Aorta (tissue), 5 donors: ENCODE measurements at regions of chr13 and their contacts with region 1.

Region 1: DNA sequence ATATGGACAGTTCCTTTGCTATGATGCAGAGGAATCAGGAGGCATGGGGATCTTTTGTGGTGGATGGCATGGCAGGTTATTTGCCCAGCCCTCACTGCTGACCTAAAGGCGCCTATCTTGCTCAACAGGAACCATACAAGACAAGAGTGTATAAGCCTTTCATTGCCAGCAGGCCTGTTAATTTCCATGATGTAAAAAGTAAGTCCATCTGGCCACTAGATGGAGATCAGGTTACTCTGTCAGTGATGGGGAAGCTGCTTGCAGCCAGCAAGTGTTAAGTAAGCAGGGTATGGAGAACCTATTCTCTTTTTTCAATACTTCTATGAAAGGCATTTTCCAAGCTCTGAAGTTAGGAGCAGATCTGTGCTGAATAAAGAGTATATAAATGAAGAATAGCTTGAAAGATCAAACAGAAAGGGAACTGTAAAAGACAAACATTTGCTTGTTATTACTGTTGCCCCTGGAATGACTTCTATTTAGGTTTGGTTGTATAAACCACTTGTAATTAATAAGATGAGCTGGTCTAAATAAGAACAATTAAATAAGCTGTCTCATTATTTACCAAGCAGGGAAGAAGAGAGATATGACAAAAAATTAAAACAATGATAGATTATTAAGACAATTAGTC is 210.9 kb downstream of the RGCC start:
- DNase-seq: peak in 1 of 2 donors; percentile 62
- ATAC-seq: peak; percentile 92
- H3K4me3 ChIP-seq: no peak overlapping the region
- H3K27ac ChIP-seq: no peak overlapping the region
- H3K4me1 ChIP-seq: no peaks in the 10 kb centered on the region
- H3K27me3 ChIP-seq: no peaks in the 10 kb centered on the region

Region 2: DNA sequence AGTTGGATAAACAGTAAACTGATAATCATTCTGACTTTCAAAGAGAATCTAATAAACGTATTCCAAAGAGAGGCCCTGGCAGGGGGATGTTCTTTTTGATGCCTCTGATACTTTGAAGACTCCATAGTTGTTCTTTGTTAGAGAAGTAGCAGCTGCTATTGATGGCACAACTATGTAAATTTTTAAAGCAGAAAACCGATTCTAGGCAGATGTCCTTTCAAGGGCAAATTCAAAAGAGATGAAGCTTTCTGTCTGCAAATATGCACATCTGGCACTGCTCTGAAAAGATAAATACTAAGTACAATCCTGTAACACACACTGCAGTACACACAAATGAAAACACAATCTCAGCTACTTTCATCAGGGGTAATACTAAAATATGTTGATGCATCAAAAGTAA is 42.5 kb after region 1 on chr13:
- intact Hi-C with region 1: loop called in 1 of 2 experiments (anchors 5 kb)
- DNase-seq: no peak
- ATAC-seq: no peak
- H3K4me3 ChIP-seq: no peak overlapping the region
- H3K27ac ChIP-seq: no peak overlapping the region
- H3K4me1 ChIP-seq: peaks cover 0 to 5% of the 10 kb centered on the region in 2 donors
- H3K27me3 ChIP-seq: no peaks in the 10 kb centered on the region

Region 3: GRCh38 chr13:42039946-42040729 is 371.9 kb after region 1 on chr13:
- intact Hi-C with region 1: loop called in 1 of 2 experiments (anchors 10 kb)
- DNase-seq: peak; percentile 95 to 98
- ATAC-seq: peak; percentile 94
- H3K4me3 ChIP-seq: peak overlapping the region; percentile 81 to 95
- H3K27ac ChIP-seq: peak overlapping the region; percentile 94 to 97
- H3K4me1 ChIP-seq: no peaks in the 10 kb centered on the region
- H3K27me3 ChIP-seq: no peaks in the 10 kb centered on the region

Region 4: DNA sequence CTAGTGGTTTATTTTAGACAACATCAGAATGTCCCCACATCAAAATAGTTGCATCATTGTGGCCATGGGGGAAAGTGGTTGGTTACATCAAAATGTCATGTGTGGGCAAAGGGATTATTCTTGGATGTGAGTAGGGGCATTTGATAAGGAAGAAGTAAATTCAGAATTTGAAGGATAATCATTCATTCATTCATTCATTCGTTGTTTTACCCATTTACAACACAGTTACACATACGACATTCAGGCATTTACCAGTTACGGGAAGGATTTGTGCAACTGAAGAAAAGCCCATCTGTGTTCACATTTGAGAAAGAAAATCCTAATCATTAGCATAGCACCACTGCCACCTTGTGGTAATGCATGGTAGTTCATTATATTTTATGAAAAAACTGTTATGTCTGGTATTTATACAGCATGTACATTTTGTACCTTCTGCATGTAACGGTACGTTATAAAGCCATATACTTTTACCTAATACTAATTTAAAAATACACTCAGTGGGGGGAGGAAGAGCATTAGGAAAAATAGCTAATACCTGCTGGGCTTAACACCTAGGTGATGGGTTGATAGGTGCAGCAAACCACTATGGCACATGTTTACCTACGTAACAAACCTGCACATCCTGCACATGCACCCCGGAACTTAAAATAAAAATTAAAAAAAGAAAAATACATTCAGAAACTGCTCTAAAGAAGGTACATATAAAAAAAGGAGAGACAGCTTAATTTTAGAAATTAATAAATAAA is 442.3 kb after region 1 on chr13:
- intact Hi-C with region 1: loop called (anchors 2 to 5 kb)
- DNase-seq: no peak
- ATAC-seq: peak; percentile 80
- H3K4me3 ChIP-seq: no peak overlapping the region
- H3K27ac ChIP-seq: no peak overlapping the region
- H3K4me1 ChIP-seq: no peaks in the 10 kb centered on the region
- H3K27me3 ChIP-seq: no peaks in the 10 kb centered on the region

Region 5: GRCh38 chr13:42786715-42787114 is 1118.5 kb after region 1 on chr13:
- intact Hi-C with region 1: no loop called
- DNase-seq: no peak
- ATAC-seq: no peak
- H3K4me3 ChIP-seq: no peak overlapping the region
- H3K27ac ChIP-seq: no peak overlapping the region
- H3K4me1 ChIP-seq: peaks cover 2 to 7% of the 10 kb centered on the region in 2 donors
- H3K27me3 ChIP-seq: no peaks in the 10 kb centered on the region